ENCODE measurements at regions of chr15 and their contacts with region 1.

Region 1: GRCh38 chr15:68053701-68054627 is at the start of gene PIAS1:
- H3K4me3 Mint-ChIP-seq: peak within 1 kb of the TSS; percentile 86
- H3K27ac Mint-ChIP-seq: peak within 1 kb of the TSS; percentile 93
- H3K4me1 Mint-ChIP-seq: peaks cover 32% of the 10 kb centered on the region
- H3K27me3 Mint-ChIP-seq: no peaks in the 10 kb centered on the region

Region 2: GRCh38 chr15:67863442-67863987 is 190.4 kb before region 1 on chr15:
- intact Hi-C with region 1: loop called (anchors 5 kb)
- H3K4me3 Mint-ChIP-seq: peak overlapping the region; percentile 89
- H3K27ac Mint-ChIP-seq: peak overlapping the region; percentile 65
- H3K4me1 Mint-ChIP-seq: peaks cover 10% of the 10 kb centered on the region
- H3K27me3 Mint-ChIP-seq: peaks cover 13% of the 10 kb centered on the region

Region 3: DNA sequence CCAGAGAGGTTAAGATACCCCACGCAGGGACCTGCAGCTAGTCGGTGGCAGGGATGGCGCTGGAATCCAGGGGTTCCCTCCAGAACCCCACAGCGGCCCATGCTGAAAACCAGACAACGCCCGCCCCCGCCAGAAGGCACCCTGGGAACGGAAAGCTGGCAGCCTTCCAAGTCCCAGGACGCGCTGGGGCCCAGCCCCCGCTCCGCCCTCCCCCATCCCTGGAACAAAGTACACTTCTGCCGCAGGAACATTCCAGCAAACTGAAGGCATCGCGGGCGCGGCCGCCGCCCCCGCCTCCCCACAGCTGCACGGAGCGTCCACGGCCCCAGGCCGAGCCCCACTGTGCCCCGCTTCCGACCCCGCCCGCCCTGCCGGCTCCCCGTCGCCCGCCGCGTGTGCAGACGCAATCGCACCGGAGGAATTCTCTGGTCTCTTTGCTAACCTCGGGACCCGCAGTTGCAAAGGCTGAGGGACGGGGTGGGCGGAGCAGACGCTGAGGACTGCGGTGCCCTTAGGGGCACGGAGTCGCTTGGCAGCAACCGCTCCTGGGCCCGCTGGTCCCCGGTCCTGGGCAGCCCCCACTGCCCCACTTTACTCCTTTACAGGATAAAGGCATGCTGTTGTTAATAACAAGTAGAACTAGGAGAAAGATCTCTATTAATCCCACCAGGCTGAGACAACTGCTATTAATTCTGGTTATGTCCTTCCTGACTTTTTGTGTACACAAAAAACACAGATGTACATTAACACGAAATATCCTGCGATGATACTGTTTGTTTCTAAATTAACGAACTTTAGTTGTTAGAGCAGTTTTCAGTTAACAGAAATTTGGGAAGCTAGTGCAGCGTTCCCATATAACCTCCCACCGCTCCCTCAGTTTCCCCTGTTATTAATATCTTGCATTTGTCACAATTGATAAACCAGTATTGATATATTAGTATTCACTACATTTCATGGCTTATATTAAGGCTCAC is 169.2 kb before region 1 on chr15:
- intact Hi-C with region 1: loop called (anchors 5 kb)
- H3K4me3 Mint-ChIP-seq: peak overlapping the region; percentile 70
- H3K27ac Mint-ChIP-seq: peak overlapping the region; percentile 88
- H3K4me1 Mint-ChIP-seq: peaks cover 77% of the 10 kb centered on the region
- H3K27me3 Mint-ChIP-seq: no peaks in the 10 kb centered on the region

Region 4: GRCh38 chr15:68012911-68013310 is 41.1 kb before region 1 on chr15:
- intact Hi-C with region 1: loop called (anchors 5 kb)
- H3K4me3 Mint-ChIP-seq: no peak overlapping the region
- H3K27ac Mint-ChIP-seq: no peak overlapping the region
- H3K4me1 Mint-ChIP-seq: peaks cover 34% of the 10 kb centered on the region
- H3K27me3 Mint-ChIP-seq: no peaks in the 10 kb centered on the region